B cell (primary cell): ENCODE measurements at regions of chr5 and their contacts with region 1.

Region 1: DNA sequence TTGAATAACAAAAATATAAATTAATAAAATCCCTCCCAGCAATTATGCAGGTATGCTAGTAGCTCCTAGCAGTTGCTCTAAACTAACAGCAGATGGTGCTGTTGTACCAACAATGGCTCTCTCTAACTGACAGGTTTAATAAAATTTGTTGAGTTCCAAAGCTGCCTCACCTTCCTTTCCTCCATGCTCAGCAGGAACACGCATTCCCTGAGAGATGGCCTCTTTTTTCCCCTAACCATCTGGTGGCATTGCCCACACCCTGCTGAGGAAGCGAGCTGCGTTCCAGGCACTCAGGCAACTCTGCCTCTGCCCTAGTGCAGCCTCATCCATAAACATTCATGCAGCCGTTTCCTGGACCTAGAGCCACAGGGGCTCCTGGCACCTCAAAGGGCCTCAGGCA is 106.2 kb downstream of the KLHL3 start:
- DNase-seq: peak; percentile 58
- ATAC-seq: peak; percentile 51
- H3K4me3 ChIP-seq: no peak overlapping the region
- H3K4me3 Mint-ChIP-seq: no peak overlapping the region
- H3K27ac ChIP-seq: no peak overlapping the region
- H3K27ac Mint-ChIP-seq: no peak overlapping the region
- H3K4me1 ChIP-seq: no peaks in the 10 kb centered on the region
- H3K4me1 Mint-ChIP-seq: no peaks in the 10 kb centered on the region
- H3K27me3 ChIP-seq: no peaks in the 10 kb centered on the region
- H3K27me3 Mint-ChIP-seq: no peaks in the 10 kb centered on the region
- CTCF ChIP-seq: peak; percentile 95

Region 2: GRCh38 chr5:137405393-137405792 is 224.3 kb before region 1 on chr5:
- CTCF ChIA-PET with region 1: no interaction called
- POLR2A ChIA-PET with region 1: no interaction called
- intact Hi-C with region 1: no loop called
- DNase-seq: no peak
- ATAC-seq: no peak
- H3K4me3 ChIP-seq: no peak overlapping the region
- H3K4me3 Mint-ChIP-seq: no peak overlapping the region
- H3K27ac ChIP-seq: no peak overlapping the region
- H3K27ac Mint-ChIP-seq: no peak overlapping the region
- H3K4me1 ChIP-seq: no peaks in the 10 kb centered on the region
- H3K4me1 Mint-ChIP-seq: no peaks in the 10 kb centered on the region
- H3K27me3 ChIP-seq: no peaks in the 10 kb centered on the region
- H3K27me3 Mint-ChIP-seq: peaks cover 2% of the 10 kb centered on the region
- CTCF ChIP-seq: no peak

Region 3: GRCh38 chr5:137516341-137516740 is 113.3 kb before region 1 on chr5:
- CTCF ChIA-PET with region 1: no interaction called
- POLR2A ChIA-PET with region 1: no interaction called
- intact Hi-C with region 1: no loop called
- DNase-seq: no peak
- ATAC-seq: no peak
- H3K4me3 ChIP-seq: no peak overlapping the region
- H3K4me3 Mint-ChIP-seq: no peak overlapping the region
- H3K27ac ChIP-seq: no peak overlapping the region
- H3K27ac Mint-ChIP-seq: no peak overlapping the region
- H3K4me1 ChIP-seq: no peaks in the 10 kb centered on the region
- H3K4me1 Mint-ChIP-seq: no peaks in the 10 kb centered on the region
- H3K27me3 ChIP-seq: peaks cover 0 to 4% (median 0%) of the 10 kb centered on the region in 4 experiments
- H3K27me3 Mint-ChIP-seq: peaks cover 23% of the 10 kb centered on the region
- CTCF ChIP-seq: no peak

Region 4: GRCh38 chr5:137665678-137666460 is 36.2 kb after region 1 on chr5:
- CTCF ChIA-PET with region 1: interaction called, 19 read pairs
- POLR2A ChIA-PET with region 1: no interaction called
- intact Hi-C with region 1: no loop called
- DNase-seq: peak; percentile 45
- ATAC-seq: peak; percentile 98
- H3K4me3 ChIP-seq: no peak overlapping the region
- H3K4me3 Mint-ChIP-seq: peak overlapping the region; percentile 36
- H3K27ac ChIP-seq: no peak overlapping the region
- H3K27ac Mint-ChIP-seq: peak overlapping the region; percentile 47
- H3K4me1 ChIP-seq: peaks cover 0 to 11% of the 10 kb centered on the region in 2 donors
- H3K4me1 Mint-ChIP-seq: peaks cover 12% of the 10 kb centered on the region
- H3K27me3 ChIP-seq: no peaks in the 10 kb centered on the region
- H3K27me3 Mint-ChIP-seq: no peaks in the 10 kb centered on the region
- CTCF ChIP-seq: no peak